ENCODE measurements at regions of chr9 and their contacts with region 1.

Region 1: DNA sequence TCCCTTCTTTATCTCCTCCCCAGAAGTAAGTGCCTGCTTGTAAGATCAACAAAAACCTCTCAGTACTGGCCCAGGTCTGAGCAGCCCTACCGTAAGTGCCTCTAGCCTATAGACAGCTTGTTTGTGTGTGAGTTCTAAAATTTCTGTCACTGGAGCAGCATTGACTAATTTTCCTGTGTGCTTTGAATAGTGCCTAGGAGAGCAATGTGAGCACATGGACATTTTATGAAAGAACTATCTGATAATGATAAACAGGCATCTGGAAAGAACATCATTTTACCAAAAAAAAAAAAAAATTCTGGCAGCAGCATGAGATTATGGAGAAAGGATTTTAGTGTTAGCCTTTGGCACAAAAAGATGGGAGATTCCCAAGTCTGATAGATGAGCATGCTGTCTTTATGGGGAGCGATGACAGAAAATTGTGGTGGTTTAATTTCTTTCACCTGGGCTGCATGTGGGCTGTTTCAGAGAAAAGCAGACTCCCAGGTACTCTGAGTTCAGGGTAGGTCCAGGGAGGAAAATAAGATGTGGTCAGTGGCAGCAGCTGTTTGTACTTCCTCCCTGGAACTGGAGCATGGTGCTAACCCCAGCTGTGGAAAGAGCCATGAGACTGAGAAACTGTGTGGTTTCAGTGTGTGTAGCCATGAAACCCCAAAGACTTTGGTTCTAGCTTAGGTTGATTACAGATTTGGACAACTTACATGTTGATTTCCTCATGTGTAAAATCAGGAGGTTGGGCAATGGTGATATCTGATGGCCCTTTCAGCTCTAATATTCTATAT is 419.9 kb downstream of the NTRK2 start:
- DNase-seq: no peak
- H3K4me3 ChIP-seq: no peak overlapping the region
- H3K27ac ChIP-seq: no peak overlapping the region
- H3K4me1 ChIP-seq: no peaks in the 10 kb centered on the region
- H3K27me3 ChIP-seq: no peaks in the 10 kb centered on the region
- CTCF ChIP-seq: no peak
- EP300 ChIP-seq: no peak
- POLR2A ChIP-seq: no peak

Region 2: DNA sequence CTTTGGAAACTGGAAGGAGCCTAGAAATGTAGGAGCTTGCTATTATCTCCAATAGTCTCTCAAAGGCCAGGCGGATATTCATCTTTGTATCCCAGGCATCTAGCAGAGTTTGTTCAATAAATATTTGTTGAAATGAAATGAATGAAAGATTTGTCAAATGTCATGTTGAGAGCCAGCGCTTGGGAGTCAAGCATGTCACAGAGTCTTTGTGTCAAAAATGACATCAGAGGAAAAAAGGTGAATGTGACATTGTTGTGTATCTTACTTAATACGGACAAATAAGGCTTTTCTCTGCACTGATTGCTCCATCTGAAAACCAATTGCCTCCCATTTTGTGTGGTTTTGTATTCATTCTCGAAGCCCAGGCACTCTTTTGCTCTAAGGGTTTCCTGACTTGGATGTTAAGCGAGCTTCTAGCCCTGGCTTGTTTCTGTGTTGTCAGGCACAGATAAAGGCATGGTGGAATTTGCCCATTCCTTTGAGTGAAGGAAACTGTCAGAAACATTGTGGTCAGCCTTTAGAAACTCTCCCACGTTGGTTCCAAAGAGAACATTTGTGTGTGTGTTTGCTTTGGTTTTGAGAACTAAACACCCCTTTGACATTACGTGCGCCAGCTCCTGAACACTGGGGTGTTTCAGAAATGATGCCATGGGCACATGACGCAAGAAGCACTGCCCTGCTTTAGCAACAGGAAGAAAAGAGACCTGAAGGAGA is 99.1 kb before region 1 on chr9:
- intact Hi-C with region 1: no loop called
- DNase-seq: no peak
- H3K4me3 ChIP-seq: no peak overlapping the region
- H3K27ac ChIP-seq: no peak overlapping the region
- H3K4me1 ChIP-seq: no peaks in the 10 kb centered on the region
- H3K27me3 ChIP-seq: no peaks in the 10 kb centered on the region
- CTCF ChIP-seq: no peak
- EP300 ChIP-seq: no peak
- POLR2A ChIP-seq: no peak

Region 3: GRCh38 chr9:85042981-85043647 is 46.3 kb before region 1 on chr9:
- intact Hi-C with region 1: loop called in 1 of 4 experiments (anchors 1 kb)
- DNase-seq: no peak
- H3K4me3 ChIP-seq: no peak overlapping the region
- H3K27ac ChIP-seq: no peak overlapping the region
- H3K4me1 ChIP-seq: no peaks in the 10 kb centered on the region
- H3K27me3 ChIP-seq: no peaks in the 10 kb centered on the region
- CTCF ChIP-seq: no peak
- EP300 ChIP-seq: no peak
- POLR2A ChIP-seq: no peak

Region 4: DNA sequence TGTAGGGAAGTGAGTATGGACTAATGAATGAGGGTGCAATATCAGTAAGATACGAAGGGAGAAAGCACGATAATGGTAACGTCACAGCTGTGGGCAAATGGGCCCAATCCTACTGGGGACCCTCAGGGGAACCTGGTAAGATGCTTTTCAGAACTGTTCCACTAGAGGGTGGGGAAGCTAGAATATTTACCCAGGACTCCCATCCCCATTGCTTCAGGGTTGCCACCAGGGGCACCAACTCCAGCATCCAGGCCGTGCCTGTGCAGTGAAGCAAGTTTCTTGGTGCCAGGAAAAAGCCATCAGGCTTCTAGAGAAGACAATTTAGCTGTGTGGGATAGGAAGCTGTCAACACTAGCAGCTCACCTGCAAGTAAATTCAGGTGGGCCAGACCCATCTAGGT is 243.1 kb after region 1 on chr9:
- intact Hi-C with region 1: no loop called
- DNase-seq: no peak
- H3K4me3 ChIP-seq: no peak overlapping the region
- H3K27ac ChIP-seq: no peak overlapping the region
- H3K4me1 ChIP-seq: no peaks in the 10 kb centered on the region
- H3K27me3 ChIP-seq: no peaks in the 10 kb centered on the region
- CTCF ChIP-seq: no peak
- EP300 ChIP-seq: no peak
- POLR2A ChIP-seq: no peak

Region 5: DNA sequence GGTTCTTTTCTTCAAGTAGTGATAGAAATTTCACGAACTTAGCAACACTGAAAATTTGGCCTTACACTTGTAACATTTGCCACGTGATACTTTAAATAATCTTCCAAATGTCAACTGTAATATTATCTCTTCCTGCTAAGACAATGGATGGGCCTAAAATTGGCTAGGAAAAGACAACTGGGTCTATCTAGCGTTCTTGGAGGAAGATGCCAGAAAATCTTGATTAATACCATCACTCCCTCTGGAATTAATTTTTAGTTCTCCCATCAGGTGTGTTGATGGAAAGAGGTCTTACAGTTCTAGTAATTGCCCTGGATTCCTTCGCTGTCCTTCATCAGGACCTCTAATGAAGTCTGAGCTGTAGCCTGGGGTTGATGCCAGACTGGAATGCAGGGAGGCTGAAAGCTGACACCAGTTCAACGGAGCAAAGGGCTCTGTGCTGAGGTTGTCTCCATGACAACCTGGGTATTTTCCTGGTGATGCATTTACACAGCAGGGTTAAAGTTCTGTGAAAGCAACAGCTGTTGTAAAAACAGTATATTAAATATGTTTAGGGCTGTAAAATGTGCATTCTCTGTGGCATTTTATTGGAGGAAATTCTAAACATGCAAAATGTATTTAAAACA is 1765.6 kb after region 1 on chr9:
- intact Hi-C with region 1: loop called in 1 of 4 experiments (anchors 5 kb)
- DNase-seq: peak; percentile 43 to 73 (median 60)
- H3K4me3 ChIP-seq: no peak overlapping the region
- H3K27ac ChIP-seq: peak overlapping the region in 1 of 2 donors; percentile 17
- H3K4me1 ChIP-seq: peaks cover 4% of the 10 kb centered on the region
- H3K27me3 ChIP-seq: no peaks in the 10 kb centered on the region
- CTCF ChIP-seq: no peak
- EP300 ChIP-seq: no peak
- POLR2A ChIP-seq: no peak